CD8-positive, alpha-beta T cell (primary cell): ENCODE measurements at regions of chr5 and their contacts with region 1.

Region 1: DNA sequence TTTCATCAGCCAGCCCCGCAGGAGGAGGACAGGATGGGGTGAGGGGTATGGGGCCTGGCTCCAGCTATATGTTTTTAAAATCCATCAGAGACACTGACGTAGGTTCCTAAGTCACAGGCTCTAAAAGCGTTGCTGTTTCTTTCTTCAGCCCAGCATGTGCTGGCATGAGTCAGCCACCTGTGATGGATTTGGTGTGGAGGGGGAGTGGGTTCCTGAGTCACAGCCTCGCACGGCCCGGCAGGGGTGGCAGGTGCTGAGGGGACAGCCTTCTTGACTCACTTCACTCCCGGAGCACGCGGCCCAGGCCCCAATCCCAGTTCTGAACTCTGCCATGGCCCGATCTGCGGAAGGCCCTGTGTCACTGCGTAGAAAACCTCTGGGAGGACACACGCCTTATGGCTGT is 38.8 kb upstream of the RPL26L1 start:
- DNase-seq: no peak
- ATAC-seq: no peak
- H3K4me3 ChIP-seq: no peak overlapping the region
- H3K4me3 Mint-ChIP-seq: no peak overlapping the region
- H3K27ac ChIP-seq: no peak overlapping the region
- H3K27ac Mint-ChIP-seq: peak overlapping the region; percentile 100
- H3K4me1 ChIP-seq: peaks cover 26% of the 10 kb centered on the region
- H3K4me1 Mint-ChIP-seq: peaks cover 27% of the 10 kb centered on the region
- H3K27me3 ChIP-seq: no peaks in the 10 kb centered on the region
- H3K27me3 Mint-ChIP-seq: no peaks in the 10 kb centered on the region
- CTCF ChIP-seq: no peak

Region 2: DNA sequence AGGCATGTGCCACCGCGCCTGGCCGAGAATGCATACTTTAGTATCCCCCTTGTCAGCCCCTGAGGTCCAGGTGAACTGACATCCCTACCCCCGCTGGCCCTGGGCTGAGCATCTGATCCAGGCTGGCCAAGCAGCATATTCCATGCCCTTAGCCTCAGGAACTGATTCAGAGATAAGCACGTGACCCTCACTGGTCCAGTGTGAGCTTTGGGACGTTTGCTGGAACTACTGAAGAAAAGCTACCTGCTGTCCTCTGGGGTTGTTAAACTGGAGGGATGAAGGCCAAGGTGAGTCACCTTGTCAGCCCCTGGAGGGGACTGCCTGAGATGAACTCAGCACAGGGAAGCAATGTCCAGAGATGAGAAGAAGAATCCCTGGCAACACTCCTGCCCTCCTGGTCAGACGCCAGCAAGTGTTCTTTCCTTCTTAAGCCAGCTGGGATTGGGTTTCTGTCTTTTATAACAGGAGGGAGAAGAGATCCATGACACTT is 854.9 kb before region 1 on chr5:
- CTCF ChIA-PET with region 1: no interaction called
- POLR2A ChIA-PET with region 1: no interaction called
- intact Hi-C with region 1: loop called in 1 of 2 experiments (anchors 5 kb)
- DNase-seq: no peak
- ATAC-seq: no peak
- H3K4me3 ChIP-seq: peak overlapping the region in 1 of 2 experiments; percentile 6
- H3K4me3 Mint-ChIP-seq: peak overlapping the region; percentile 15
- H3K27ac ChIP-seq: peak overlapping the region; percentile 34 to 67
- H3K27ac Mint-ChIP-seq: peak overlapping the region; percentile 98
- H3K4me1 ChIP-seq: peaks cover 57% of the 10 kb centered on the region
- H3K4me1 Mint-ChIP-seq: peaks cover 72% of the 10 kb centered on the region
- H3K27me3 ChIP-seq: no peaks in the 10 kb centered on the region
- H3K27me3 Mint-ChIP-seq: no peaks in the 10 kb centered on the region
- CTCF ChIP-seq: no peak

Region 3: DNA sequence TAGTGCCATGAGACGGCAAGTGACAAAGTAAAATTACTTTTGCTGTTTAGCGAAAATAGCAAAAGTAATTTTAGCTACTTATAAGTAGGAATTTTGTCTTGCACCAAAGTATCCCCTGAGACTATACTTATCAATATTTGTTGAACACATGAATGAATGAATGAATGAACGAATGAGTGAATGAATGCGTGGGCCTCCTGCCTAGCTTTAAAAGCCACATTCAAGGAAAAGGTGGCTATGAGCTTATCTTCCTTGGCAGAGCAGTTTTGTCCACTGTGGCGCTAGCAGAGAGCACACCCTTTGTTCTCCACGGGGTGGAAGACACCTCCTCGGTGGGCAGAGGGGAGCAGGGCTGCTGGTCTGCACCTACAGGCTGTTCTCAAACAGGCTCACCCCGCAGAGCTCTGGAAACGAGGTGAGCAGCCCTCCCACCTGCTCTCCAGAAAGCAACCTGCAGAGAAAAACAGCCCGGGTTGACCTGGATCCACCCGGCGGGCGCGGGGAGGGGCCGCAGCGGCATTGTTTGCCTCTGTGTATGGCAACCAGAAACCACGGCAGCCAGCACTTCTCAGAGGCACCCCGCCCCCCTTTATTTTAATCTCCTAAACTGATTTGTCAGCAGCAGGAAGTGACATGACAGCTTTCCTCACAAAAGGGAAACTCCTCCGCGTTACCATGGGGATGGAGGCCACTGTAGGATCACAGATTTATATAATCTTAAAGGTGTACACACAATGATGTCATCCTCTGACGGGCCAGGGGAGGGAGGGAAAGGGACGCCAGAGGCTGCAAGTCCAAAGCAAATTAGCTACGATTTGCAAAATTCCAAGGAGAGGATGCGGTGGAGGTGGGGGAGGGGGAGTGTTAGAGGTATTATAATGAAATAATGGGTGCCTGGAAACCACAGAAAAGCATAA is 155.3 kb before region 1 on chr5:
- CTCF ChIA-PET with region 1: no interaction called
- POLR2A ChIA-PET with region 1: interaction called, 7 read pairs
- intact Hi-C with region 1: loop called (anchors 1 kb)
- DNase-seq: peak; percentile 88 to 100 (median 96)
- ATAC-seq: peak; percentile 77
- H3K4me3 ChIP-seq: peak overlapping the region; percentile 41 to 48
- H3K4me3 Mint-ChIP-seq: peak overlapping the region; percentile 81
- H3K27ac ChIP-seq: peak overlapping the region; percentile 86 to 89
- H3K27ac Mint-ChIP-seq: peak overlapping the region; percentile 96
- H3K4me1 ChIP-seq: peaks cover 33% of the 10 kb centered on the region
- H3K4me1 Mint-ChIP-seq: peaks cover 52% of the 10 kb centered on the region
- H3K27me3 ChIP-seq: no peaks in the 10 kb centered on the region
- H3K27me3 Mint-ChIP-seq: no peaks in the 10 kb centered on the region
- CTCF ChIP-seq: no peak

Region 4: GRCh38 chr5:172833686-172834414 is 86.6 kb before region 1 on chr5 and contains the start of gene ERGIC1:
- CTCF ChIA-PET with region 1: no interaction called
- POLR2A ChIA-PET with region 1: no interaction called
- intact Hi-C with region 1: loop called (anchors 2 to 5 kb)
- DNase-seq: peak in 8 of 9 experiments; percentile 58 to 84 (median 72)
- ATAC-seq: peak; percentile 74
- H3K4me3 ChIP-seq: peak within 1 kb of the TSS; percentile 67 to 81
- H3K4me3 Mint-ChIP-seq: peak within 1 kb of the TSS; percentile 86
- H3K27ac ChIP-seq: peak within 1 kb of the TSS; percentile 67 to 88
- H3K27ac Mint-ChIP-seq: peak within 1 kb of the TSS; percentile 92
- H3K4me1 ChIP-seq: peaks cover 44% of the 10 kb centered on the region
- H3K4me1 Mint-ChIP-seq: peaks cover 44% of the 10 kb centered on the region
- H3K27me3 ChIP-seq: no peaks in the 10 kb centered on the region
- H3K27me3 Mint-ChIP-seq: no peaks in the 10 kb centered on the region
- CTCF ChIP-seq: no peak
- total RNA-seq, gene ERGIC1: 61.0 to 61.2 TPM

Region 5: GRCh38 chr5:172860520-172861443 is 59.7 kb before region 1 on chr5:
- CTCF ChIA-PET with region 1: no interaction called
- POLR2A ChIA-PET with region 1: no interaction called
- intact Hi-C with region 1: loop called in 1 of 2 experiments (anchors 5 kb)
- DNase-seq: no peak
- ATAC-seq: no peak
- H3K4me3 ChIP-seq: no peak overlapping the region
- H3K4me3 Mint-ChIP-seq: no peak overlapping the region
- H3K27ac ChIP-seq: no peak overlapping the region
- H3K27ac Mint-ChIP-seq: peak overlapping the region; percentile 79
- H3K4me1 ChIP-seq: peaks cover 5% of the 10 kb centered on the region
- H3K4me1 Mint-ChIP-seq: peaks cover 50% of the 10 kb centered on the region
- H3K27me3 ChIP-seq: no peaks in the 10 kb centered on the region
- H3K27me3 Mint-ChIP-seq: no peaks in the 10 kb centered on the region
- CTCF ChIP-seq: no peak

Region 6: GRCh38 chr5:172932313-172933017 is 12.0 kb after region 1 on chr5:
- CTCF ChIA-PET with region 1: interaction called, 13 read pairs
- POLR2A ChIA-PET with region 1: no interaction called
- intact Hi-C with region 1: no loop called
- DNase-seq: peak; percentile 59 to 86 (median 75)
- ATAC-seq: peak; percentile 100
- H3K4me3 ChIP-seq: no peak overlapping the region
- H3K4me3 Mint-ChIP-seq: no peak overlapping the region
- H3K27ac ChIP-seq: no peak overlapping the region
- H3K27ac Mint-ChIP-seq: peak overlapping the region; percentile 67
- H3K4me1 ChIP-seq: no peaks in the 10 kb centered on the region
- H3K4me1 Mint-ChIP-seq: peaks cover 7% of the 10 kb centered on the region
- H3K27me3 ChIP-seq: no peaks in the 10 kb centered on the region
- H3K27me3 Mint-ChIP-seq: no peaks in the 10 kb centered on the region
- CTCF ChIP-seq: peak; percentile 97